CD4-positive, alpha-beta T cell (primary cell): ENCODE measurements at regions of chr19 and their contacts with region 1.

Region 1: DNA sequence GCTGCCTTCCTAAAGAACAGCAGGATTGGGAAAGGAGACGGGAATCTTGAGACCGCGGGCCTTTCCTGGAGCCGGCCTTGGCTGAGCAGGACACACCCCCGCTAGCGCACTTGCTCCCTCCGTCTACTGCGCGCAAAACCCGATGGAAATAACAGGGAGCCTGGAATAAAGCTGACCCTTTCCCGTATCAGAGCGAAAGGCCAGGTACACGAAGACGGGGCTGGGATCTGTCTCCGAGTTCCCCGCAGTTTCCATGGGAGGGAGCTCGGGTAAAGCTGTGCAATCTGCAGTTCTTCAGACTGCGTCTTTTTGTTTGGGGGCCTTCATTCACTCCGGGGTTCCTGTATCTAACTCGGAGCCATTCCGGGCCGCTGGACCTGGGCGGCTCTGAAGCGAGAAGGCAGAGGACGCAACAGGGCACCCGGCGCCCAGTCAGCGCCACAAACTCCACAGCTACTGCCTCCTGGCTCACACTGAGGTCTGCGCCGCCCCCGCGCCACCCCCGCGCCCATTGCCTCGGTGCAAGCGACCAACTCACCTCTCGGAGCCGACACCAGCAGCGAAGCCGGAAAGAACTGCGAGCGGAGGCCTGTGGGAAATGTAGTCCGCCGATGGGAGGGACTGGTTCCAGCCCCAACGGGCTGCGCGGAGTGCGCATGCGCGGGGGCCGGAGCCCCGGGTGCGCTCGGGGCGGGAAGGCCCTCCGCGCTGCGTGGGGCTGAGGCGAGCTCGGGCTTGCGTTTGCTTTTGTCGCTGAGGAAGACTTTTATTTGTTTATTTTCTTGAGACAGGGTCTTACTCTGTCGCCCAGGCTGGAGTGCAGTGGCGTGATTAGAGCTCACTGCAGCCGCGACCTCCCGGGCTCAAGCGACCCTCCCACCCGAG is at the start of gene ZFP14:
- DNase-seq: peak; percentile 89 to 97 (median 93)
- ATAC-seq: peak; percentile 97
- H3K4me3 ChIP-seq: peak within 1 kb of the TSS; percentile 77
- H3K4me3 Mint-ChIP-seq: peak within 1 kb of the TSS; percentile 98
- H3K27ac ChIP-seq: peak within 1 kb of the TSS; percentile 74 to 84
- H3K27ac Mint-ChIP-seq: peak within 1 kb of the TSS; percentile 99
- H3K4me1 ChIP-seq: peaks cover 18% of the 10 kb centered on the region
- H3K4me1 Mint-ChIP-seq: peaks cover 21% of the 10 kb centered on the region
- H3K27me3 ChIP-seq: no peaks in the 10 kb centered on the region
- H3K27me3 Mint-ChIP-seq: no peaks in the 10 kb centered on the region
- CTCF ChIP-seq: peak; percentile 39
- total RNA-seq, gene ZFP14: 3.7 to 4.4 TPM

Region 2: GRCh38 chr19:36489118-36489919 is 110.5 kb after region 1 on chr19 and contains the start of gene ZNF566:
- CTCF ChIA-PET with region 1: interaction called, 3 read pairs
- POLR2A ChIA-PET with region 1: interaction called, 23 read pairs
- intact Hi-C with region 1: loop called in 1 of 2 experiments (anchors 1 kb)
- DNase-seq: peak; percentile 84 to 97 (median 89)
- ATAC-seq: peak; percentile 90
- H3K4me3 ChIP-seq: peak within 1 kb of the TSS; percentile 64
- H3K4me3 Mint-ChIP-seq: peak within 1 kb of the TSS; percentile 97
- H3K27ac ChIP-seq: peak within 1 kb of the TSS; percentile 84 to 87
- H3K27ac Mint-ChIP-seq: peak within 1 kb of the TSS; percentile 99
- H3K4me1 ChIP-seq: peaks cover 19% of the 10 kb centered on the region
- H3K4me1 Mint-ChIP-seq: peaks cover 36% of the 10 kb centered on the region
- H3K27me3 ChIP-seq: no peaks in the 10 kb centered on the region
- H3K27me3 Mint-ChIP-seq: no peaks in the 10 kb centered on the region
- CTCF ChIP-seq: no peak
- total RNA-seq, gene ZNF566: 6.3 to 6.8 TPM

Region 3: GRCh38 chr19:36687214-36688056 is 308.6 kb after region 1 on chr19 and contains the start of gene ZNF567:
- CTCF ChIA-PET with region 1: no interaction called
- POLR2A ChIA-PET with region 1: no interaction called
- intact Hi-C with region 1: loop called in 1 of 2 experiments (anchors 5 kb)
- DNase-seq: peak; percentile 94 to 99 (median 97)
- ATAC-seq: peak; percentile 93
- H3K4me3 ChIP-seq: peak within 1 kb of the TSS; percentile 67
- H3K4me3 Mint-ChIP-seq: peak within 1 kb of the TSS; percentile 99
- H3K27ac ChIP-seq: peak within 1 kb of the TSS; percentile 47 to 56
- H3K27ac Mint-ChIP-seq: peak within 1 kb of the TSS; percentile 97
- H3K4me1 ChIP-seq: peaks cover 23% of the 10 kb centered on the region
- H3K4me1 Mint-ChIP-seq: peaks cover 40% of the 10 kb centered on the region
- H3K27me3 ChIP-seq: no peaks in the 10 kb centered on the region
- H3K27me3 Mint-ChIP-seq: no peaks in the 10 kb centered on the region
- CTCF ChIP-seq: no peak
- total RNA-seq, gene ZNF567: 7.3 to 7.6 TPM

Region 4: GRCh38 chr19:36973021-36973843 is 594.4 kb after region 1 on chr19:
- CTCF ChIA-PET with region 1: interaction called, 5 read pairs
- POLR2A ChIA-PET with region 1: no interaction called
- intact Hi-C with region 1: loop called in 1 of 2 experiments (anchors 5 kb)
- DNase-seq: peak; percentile 48 to 91 (median 72)
- ATAC-seq: peak; percentile 98
- H3K4me3 ChIP-seq: peak overlapping the region; percentile 83
- H3K4me3 Mint-ChIP-seq: peak overlapping the region; percentile 92
- H3K27ac ChIP-seq: peak overlapping the region; percentile 57 to 78
- H3K27ac Mint-ChIP-seq: peak overlapping the region; percentile 94
- H3K4me1 ChIP-seq: peaks cover 17% of the 10 kb centered on the region
- H3K4me1 Mint-ChIP-seq: peaks cover 16% of the 10 kb centered on the region
- H3K27me3 ChIP-seq: no peaks in the 10 kb centered on the region
- H3K27me3 Mint-ChIP-seq: no peaks in the 10 kb centered on the region
- CTCF ChIP-seq: peak; percentile 97

Region 5: GRCh38 chr19:37370880-37371661 is 992.2 kb after region 1 on chr19 and contains the start of gene ZNF527:
- CTCF ChIA-PET with region 1: no interaction called
- POLR2A ChIA-PET with region 1: no interaction called
- intact Hi-C with region 1: loop called in 1 of 2 experiments (anchors 2 kb)
- DNase-seq: peak; percentile 93 to 98 (median 96)
- ATAC-seq: peak; percentile 96
- H3K4me3 ChIP-seq: peak within 1 kb of the TSS; percentile 59
- H3K4me3 Mint-ChIP-seq: peak within 1 kb of the TSS; percentile 96
- H3K27ac ChIP-seq: peak within 1 kb of the TSS; percentile 76 to 85
- H3K27ac Mint-ChIP-seq: peak within 1 kb of the TSS; percentile 96
- H3K4me1 ChIP-seq: peaks cover 17% of the 10 kb centered on the region
- H3K4me1 Mint-ChIP-seq: peaks cover 16% of the 10 kb centered on the region
- H3K27me3 ChIP-seq: no peaks in the 10 kb centered on the region
- H3K27me3 Mint-ChIP-seq: no peaks in the 10 kb centered on the region
- CTCF ChIP-seq: no peak
- total RNA-seq, gene ZNF527: 7.8 to 8.4 TPM